Dendritic cell treated with granulocyte-macrophage colony-stimulating factor and Interleukin-4, amounts not matched to agents 40 ng/mL and 50 ng/mL, for 4 days (primary cell): ENCODE measurements at regions of chr15 and their contacts with region 1.

Region 1: GRCh38 chr15:75069301-75069925 is 46.0 kb downstream of the PPCDC start:
- H3K4me3 Mint-ChIP-seq: no peak overlapping the region
- H3K27ac Mint-ChIP-seq: peak overlapping the region; percentile 87
- H3K4me1 Mint-ChIP-seq: peaks cover 87% of the 10 kb centered on the region
- H3K27me3 Mint-ChIP-seq: no peaks in the 10 kb centered on the region

Region 2: DNA sequence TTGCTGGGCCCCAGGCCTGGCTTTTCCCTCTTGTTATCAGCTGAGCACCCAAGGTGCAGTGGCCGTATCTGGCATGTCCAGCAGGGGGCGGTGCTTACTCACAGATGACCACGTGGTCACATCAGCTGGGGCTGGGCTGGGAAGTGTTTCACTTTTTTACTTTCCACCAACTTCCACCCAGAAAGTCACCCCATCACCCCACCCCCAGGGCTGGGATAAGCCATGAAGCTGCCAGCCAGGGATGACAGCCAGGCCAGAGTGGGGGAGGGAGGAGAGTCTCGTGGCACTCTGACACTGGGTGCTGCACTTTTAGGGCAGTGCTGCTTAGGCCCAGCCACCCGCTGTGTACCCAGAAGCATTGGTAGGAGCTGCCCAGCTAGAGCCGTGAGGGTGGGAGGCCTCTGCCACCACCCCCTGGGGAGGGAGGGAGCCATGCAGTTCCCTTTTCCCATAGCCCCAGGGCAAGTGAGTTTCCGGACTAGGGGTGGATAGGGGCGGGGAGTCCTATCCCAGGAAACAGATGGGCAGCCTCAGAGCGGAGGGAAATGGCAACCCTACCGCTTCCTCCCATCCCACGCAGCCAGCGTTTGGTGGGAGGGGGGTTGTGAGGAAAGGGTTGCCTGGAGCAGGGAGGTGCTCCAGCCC is 39.9 kb before region 1 on chr15:
- intact Hi-C with region 1: loop called (anchors 5 kb)
- H3K4me3 Mint-ChIP-seq: peak overlapping the region; percentile 59
- H3K27ac Mint-ChIP-seq: peak overlapping the region; percentile 89
- H3K4me1 Mint-ChIP-seq: peaks cover 96% of the 10 kb centered on the region
- H3K27me3 Mint-ChIP-seq: no peaks in the 10 kb centered on the region

Region 3: DNA sequence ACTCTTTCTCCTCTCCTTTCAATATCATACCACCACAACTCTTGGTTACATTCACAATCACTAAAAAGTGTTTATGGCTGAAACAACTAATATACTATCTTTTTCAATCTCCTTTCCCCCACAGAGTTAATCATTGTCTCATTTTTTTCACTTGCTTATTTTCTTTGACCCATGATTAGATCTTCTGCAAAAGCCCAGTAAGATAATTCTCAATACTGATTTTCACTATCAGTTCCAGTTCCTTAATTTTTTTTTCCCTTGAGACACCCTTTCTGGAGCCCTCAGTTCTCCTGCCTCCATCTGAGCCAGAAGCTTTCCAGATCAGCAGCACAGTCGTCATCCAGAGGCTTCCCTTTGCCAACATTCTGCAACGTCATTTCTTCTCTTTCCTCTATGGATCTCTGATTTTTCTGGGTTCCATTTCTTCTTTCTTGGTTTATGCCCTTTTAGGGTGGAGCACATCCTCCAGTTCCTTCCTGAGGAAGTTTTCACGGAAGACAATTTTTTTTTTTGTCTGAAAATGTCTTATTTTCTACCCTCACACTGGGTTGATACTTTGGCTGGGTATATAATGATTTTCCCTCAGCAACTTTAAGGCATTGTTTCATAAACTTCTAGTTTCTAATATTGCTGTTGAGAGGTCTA is 43.6 kb after region 1 on chr15:
- intact Hi-C with region 1: loop called (anchors 5 kb)
- H3K4me3 Mint-ChIP-seq: no peak overlapping the region
- H3K27ac Mint-ChIP-seq: peak overlapping the region; percentile 64
- H3K4me1 Mint-ChIP-seq: peaks cover 61% of the 10 kb centered on the region
- H3K27me3 Mint-ChIP-seq: peaks cover 2% of the 10 kb centered on the region